Heart right ventricle (tissue), 16 donors: ENCODE measurements at regions of chr2 and their contacts with region 1.

Region 1: DNA sequence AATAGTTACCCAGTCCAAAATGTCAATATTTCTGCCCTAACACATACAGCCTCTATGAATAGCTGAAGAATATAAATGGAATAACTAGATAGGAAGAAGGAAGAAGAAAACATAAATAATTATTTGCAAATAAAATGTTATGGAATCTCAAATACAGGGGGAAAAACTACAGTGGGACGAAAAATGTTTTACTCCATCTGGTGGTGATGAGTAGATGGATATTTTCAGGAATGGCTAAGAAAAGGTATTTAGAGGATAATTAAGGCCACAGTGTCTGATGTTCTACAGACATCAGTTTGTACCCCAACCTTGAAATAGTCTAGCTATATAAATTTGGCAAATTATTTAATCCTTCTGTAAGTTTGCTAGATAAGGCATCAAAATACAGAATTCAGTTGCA is 178.1 kb upstream of the FSHR start:
- DNase-seq: no peak
- ATAC-seq: no peak
- H3K4me3 ChIP-seq: no peak overlapping the region
- H3K27ac ChIP-seq: no peak overlapping the region
- H3K4me1 ChIP-seq: no peaks in the 10 kb centered on the region
- H3K27me3 ChIP-seq: no peaks in the 10 kb centered on the region
- CTCF ChIP-seq: peak in 5 of 9 donors; percentile 13 to 30 (median 25)

Region 2: GRCh38 chr2:48952143-48952542 is 380.3 kb before region 1 on chr2:
- intact Hi-C with region 1: loop called in 3 of 10 experiments (anchors 10 kb)
- DNase-seq: no peak
- ATAC-seq: no peak
- H3K4me3 ChIP-seq: no peak overlapping the region
- H3K27ac ChIP-seq: no peak overlapping the region
- H3K4me1 ChIP-seq: peaks cover 0 to 3% (median 0%) of the 10 kb centered on the region in 9 donors
- H3K27me3 ChIP-seq: no peaks in the 10 kb centered on the region
- CTCF ChIP-seq: no peak

Region 3: DNA sequence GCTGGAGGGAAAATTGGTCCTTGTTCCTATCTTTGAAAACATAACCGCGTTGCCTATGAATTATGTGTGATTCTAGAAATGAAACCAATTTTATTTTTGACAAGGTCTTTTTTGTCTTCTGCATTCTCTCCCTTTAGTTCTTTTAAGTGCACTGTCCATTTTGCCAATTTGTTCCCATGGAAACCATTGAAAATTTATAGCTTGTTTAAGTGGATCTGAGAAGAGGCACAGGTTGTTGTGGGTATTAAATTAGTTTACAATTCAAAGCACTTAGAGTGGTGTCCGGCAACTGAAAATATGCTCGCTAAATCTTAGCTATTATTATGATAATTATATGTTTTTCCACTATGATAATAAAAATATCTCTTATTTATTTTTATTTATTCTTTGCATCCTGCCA is 70.6 kb before region 1 on chr2:
- intact Hi-C with region 1: loop called in 1 of 10 experiments (anchors 10 kb)
- DNase-seq: no peak
- ATAC-seq: no peak
- H3K4me3 ChIP-seq: no peak overlapping the region
- H3K27ac ChIP-seq: no peak overlapping the region
- H3K4me1 ChIP-seq: peaks cover 0 to 17% (median 0%) of the 10 kb centered on the region in 9 donors
- H3K27me3 ChIP-seq: no peaks in the 10 kb centered on the region
- CTCF ChIP-seq: no peak